OCI-LY7 (cell line): ENCODE measurements at regions of chr12 and their contacts with region 1.

Region 1: GRCh38 chr12:14577344-14577743 is 9.7 kb upstream of the PLBD1 start:
- DNase-seq: peak; percentile 79
- H3K4me3 ChIP-seq: peak overlapping the region; percentile 41
- H3K27ac ChIP-seq: peak overlapping the region; percentile 93
- H3K4me1 ChIP-seq: peaks cover 62% of the 10 kb centered on the region
- CTCF ChIP-seq: no peak

Region 2: DNA sequence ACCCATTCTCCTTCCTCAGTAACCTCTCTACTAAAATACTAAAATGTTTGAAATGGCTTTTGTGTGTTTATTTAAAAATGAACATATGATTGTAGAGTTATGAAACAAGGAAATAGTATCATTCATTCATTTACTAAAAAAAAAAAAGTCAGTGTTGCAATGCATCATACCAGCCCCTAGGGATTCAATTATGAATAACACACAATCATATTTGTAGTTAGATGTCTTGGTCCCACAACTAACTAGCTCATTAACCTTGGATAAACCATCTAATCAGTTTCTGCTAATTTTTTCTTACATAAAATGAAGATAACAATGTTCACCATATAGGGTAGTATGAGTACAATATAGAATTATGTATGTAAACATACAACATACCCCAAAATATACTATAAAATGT is 779.2 kb before region 1 on chr12:
- CTCF ChIA-PET with region 1: no interaction called
- POLR2A ChIA-PET with region 1: no interaction called
- intact Hi-C with region 1: no loop called
- DNase-seq: no peak
- H3K4me3 ChIP-seq: no peak overlapping the region
- H3K27ac ChIP-seq: no peak overlapping the region
- H3K4me1 ChIP-seq: no peaks in the 10 kb centered on the region
- CTCF ChIP-seq: no peak

Region 3: GRCh38 chr12:14554281-14555007 is 22.9 kb before region 1 on chr12:
- CTCF ChIA-PET with region 1: no interaction called
- POLR2A ChIA-PET with region 1: interaction called, 10 read pairs
- intact Hi-C with region 1: no loop called
- DNase-seq: no peak
- H3K4me3 ChIP-seq: no peak overlapping the region
- H3K27ac ChIP-seq: no peak overlapping the region
- H3K4me1 ChIP-seq: peaks cover 14% of the 10 kb centered on the region
- CTCF ChIP-seq: no peak

Region 4: DNA sequence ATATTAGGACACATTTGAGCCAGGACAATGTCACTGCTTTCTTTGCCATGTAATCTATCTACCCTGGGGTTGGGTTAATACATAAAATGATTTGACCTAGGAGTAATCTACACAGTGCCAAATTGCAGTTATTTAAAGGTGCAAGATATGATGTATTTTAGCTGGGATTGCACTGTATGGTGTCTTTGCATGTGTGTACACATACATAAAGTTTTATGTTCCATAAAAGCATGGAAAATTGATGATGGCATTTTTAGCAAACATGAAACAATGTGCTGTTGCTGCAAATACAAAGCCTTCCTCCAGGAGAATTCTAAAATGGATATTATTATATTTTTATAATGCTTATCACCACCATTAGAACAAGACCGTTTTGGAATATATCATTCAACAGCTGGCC is 14.4 kb after region 1 on chr12:
- CTCF ChIA-PET with region 1: interaction called, 4 read pairs
- POLR2A ChIA-PET with region 1: interaction called, 10 read pairs
- intact Hi-C with region 1: no loop called
- DNase-seq: no peak
- H3K4me3 ChIP-seq: no peak overlapping the region
- H3K27ac ChIP-seq: no peak overlapping the region
- H3K4me1 ChIP-seq: peaks cover 19% of the 10 kb centered on the region
- CTCF ChIP-seq: no peak

Region 5: DNA sequence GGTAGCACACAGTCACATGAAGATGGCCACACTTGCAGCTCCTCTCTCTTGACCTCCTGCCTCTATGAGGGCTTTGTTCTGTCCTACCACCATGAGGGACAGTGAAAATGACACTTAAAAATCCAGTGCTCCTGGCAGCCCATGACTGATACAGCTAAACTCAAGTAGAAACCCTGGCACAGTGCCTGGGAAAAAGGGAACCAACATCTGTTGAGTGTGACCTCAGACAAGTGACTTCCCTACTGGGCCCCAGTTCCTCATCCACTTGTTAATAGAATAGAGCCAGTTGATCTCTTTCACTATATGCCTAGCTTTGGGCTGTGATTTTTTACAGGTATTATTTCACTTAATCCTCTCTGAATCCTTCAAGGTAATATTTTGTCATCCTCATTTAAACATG is 114.2 kb after region 1 on chr12:
- CTCF ChIA-PET with region 1: no interaction called
- POLR2A ChIA-PET with region 1: no interaction called
- intact Hi-C with region 1: no loop called
- DNase-seq: no peak
- H3K4me3 ChIP-seq: no peak overlapping the region
- H3K27ac ChIP-seq: no peak overlapping the region
- H3K4me1 ChIP-seq: no peaks in the 10 kb centered on the region
- CTCF ChIP-seq: no peak